ENCODE measurements at regions of chr2 and their contacts with region 1.

Region 1: GRCh38 chr2:179936654-179937053 is 70.4 kb downstream of the CWC22 start:
- DNase-seq: peak; percentile 80
- H3K4me3 ChIP-seq: no peak overlapping the region
- H3K27ac ChIP-seq: no peak overlapping the region
- H3K4me1 ChIP-seq: peaks cover 29% of the 10 kb centered on the region
- CTCF ChIP-seq: peak; percentile 93

Region 2: GRCh38 chr2:179422037-179422643 is 514.5 kb before region 1 on chr2:
- CTCF ChIA-PET with region 1: no interaction called
- POLR2A ChIA-PET with region 1: interaction called, 5 read pairs
- intact Hi-C with region 1: loop called (anchors 1 kb)
- DNase-seq: peak; percentile 70
- H3K4me3 ChIP-seq: no peak overlapping the region
- H3K27ac ChIP-seq: no peak overlapping the region
- H3K4me1 ChIP-seq: no peaks in the 10 kb centered on the region
- CTCF ChIP-seq: peak; percentile 84

Region 3: GRCh38 chr2:179751163-179751809 is 185.4 kb before region 1 on chr2:
- CTCF ChIA-PET with region 1: no interaction called
- POLR2A ChIA-PET with region 1: no interaction called
- intact Hi-C with region 1: loop called (anchors 10 kb)
- DNase-seq: peak; percentile 31
- H3K4me3 ChIP-seq: no peak overlapping the region
- H3K27ac ChIP-seq: no peak overlapping the region
- H3K4me1 ChIP-seq: no peaks in the 10 kb centered on the region
- CTCF ChIP-seq: peak; percentile 88

Region 4: GRCh38 chr2:179773986-179774385 is 162.7 kb before region 1 on chr2:
- CTCF ChIA-PET with region 1: no interaction called
- POLR2A ChIA-PET with region 1: no interaction called
- intact Hi-C with region 1: loop called (anchors 5 kb)
- DNase-seq: no peak
- H3K4me3 ChIP-seq: no peak overlapping the region
- H3K27ac ChIP-seq: no peak overlapping the region
- H3K4me1 ChIP-seq: no peaks in the 10 kb centered on the region
- CTCF ChIP-seq: no peak

Region 5: DNA sequence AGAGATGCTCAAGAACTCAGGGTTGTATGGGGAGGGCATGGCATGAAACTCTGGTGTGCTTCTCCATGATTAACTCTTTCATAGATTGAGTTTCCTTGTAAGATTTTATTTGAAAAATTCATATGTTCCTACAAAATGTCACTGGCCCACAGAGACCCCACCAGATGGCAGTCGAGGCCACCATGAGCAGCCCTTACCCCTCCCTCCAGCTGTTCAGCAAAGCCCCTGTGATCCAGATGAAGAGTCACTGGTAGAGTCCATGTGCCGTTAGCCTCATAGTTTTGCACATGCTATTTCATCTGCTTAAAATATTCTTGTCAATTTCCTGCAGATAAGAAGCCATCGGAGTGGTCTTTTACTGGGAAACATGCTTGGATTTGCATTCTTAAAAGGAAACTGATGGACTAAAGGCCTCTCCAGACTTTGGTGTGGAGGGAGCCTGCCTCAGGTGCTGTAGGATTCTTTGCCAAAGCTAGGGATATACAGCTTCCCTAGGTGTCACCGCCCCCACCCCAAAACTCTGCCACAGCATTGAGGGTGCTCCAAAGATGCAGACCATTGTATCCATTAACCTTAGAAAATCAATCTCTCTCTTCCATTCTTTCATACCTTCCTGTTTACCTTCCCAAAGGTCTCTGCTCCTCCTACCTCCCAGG is 94.0 kb before region 1 on chr2:
- CTCF ChIA-PET with region 1: no interaction called
- POLR2A ChIA-PET with region 1: interaction called, 6 read pairs
- intact Hi-C with region 1: loop called (anchors 1 kb)
- DNase-seq: peak; percentile 77
- H3K4me3 ChIP-seq: peak overlapping the region; percentile 1
- H3K27ac ChIP-seq: peak overlapping the region; percentile 28
- H3K4me1 ChIP-seq: peaks cover 48% of the 10 kb centered on the region
- CTCF ChIP-seq: peak; percentile 94

Region 6: DNA sequence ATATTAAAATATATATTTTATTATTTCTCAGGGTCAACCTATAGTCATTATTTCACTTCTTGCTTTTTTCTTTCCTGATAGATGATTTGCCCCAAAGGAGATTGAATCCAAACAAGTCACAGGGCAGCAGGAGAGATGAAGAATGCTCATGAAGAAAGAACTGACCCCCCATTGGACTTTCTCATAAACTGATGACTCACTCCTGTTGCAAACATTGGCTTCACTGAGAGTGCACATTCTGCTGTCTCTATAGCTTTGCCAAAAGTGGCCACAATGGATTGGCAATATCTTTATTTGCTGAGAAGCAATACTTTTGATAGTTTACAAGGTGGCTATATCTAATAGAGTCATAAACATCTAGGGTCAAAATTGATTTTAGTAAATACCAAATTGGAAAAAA is 19.4 kb before region 1 on chr2:
- CTCF ChIA-PET with region 1: no interaction called
- POLR2A ChIA-PET with region 1: interaction called, 14 read pairs
- intact Hi-C with region 1: no loop called
- DNase-seq: no peak
- H3K4me3 ChIP-seq: no peak overlapping the region
- H3K27ac ChIP-seq: no peak overlapping the region
- H3K4me1 ChIP-seq: no peaks in the 10 kb centered on the region
- CTCF ChIP-seq: no peak

Region 7: DNA sequence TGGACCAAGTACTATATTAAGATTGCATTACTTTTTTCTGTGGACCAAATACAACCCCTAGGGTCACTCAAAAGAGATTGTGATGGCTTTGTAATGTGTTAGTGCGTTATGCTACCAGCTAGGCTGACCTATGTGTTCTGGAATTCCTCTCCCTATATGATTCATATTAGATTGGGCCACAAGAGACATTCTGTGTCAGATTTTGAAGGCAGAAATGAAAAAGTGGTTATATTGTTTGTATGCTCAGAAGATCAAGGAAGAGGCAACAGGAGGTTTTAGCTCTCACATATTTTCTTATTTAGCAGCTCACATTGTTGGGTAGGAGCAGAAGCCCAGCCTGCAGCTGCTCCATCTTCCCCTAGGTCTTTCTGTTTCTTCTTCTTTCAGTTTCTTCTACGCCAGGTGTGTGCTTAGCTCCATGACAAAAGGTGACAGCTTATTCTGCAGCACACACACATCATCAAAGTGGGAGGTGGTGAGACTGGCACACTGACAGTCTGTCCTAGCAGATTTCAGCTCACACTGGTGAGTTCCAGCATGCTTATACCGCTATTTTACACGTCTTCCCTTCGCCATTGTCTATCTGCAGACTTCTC is 887.0 kb after region 1 on chr2:
- CTCF ChIA-PET with region 1: no interaction called
- POLR2A ChIA-PET with region 1: no interaction called
- intact Hi-C with region 1: no loop called
- DNase-seq: no peak
- H3K4me3 ChIP-seq: no peak overlapping the region
- H3K27ac ChIP-seq: no peak overlapping the region
- H3K4me1 ChIP-seq: no peaks in the 10 kb centered on the region
- CTCF ChIP-seq: no peak